ENCODE measurements at regions of chr1 and their contacts with region 1.

Region 1: DNA sequence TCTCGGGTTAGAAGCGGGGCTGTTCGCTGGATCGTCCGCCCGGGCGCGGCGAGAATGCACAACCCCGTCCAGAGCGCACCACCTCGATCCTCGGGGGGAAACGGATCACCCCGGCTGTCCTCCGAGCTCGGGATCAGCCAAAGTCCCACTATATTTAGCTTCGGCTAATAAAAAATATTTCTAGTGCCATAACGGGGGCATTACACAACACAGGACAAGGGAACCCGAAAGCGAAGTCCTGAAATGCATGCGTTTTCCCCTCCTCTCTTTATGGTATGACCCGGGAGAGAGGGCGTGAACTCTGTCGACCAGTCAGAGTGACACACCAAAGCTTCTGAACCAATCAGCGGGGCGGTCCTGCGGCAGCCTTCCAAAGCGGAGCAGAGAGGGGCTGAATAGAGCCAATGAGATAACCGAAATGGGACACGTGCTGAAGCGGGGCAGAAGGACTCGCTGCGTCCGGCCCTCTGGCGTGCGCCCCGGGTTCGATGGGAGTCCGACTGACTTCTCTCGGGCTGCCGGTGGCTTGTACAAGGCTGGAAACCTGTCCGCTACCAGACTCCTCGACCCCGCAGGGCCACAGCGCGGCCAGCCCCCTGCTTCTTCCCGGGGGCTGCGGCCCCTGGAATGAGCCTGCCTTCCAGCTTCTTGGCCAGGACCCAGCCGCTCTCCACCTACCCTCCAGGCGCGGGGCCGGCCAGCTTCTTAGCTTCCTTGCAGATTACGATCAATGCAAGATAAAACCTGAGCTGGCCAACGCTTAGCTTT is at the start of gene ALDH4A1:
- DNase-seq: peak; percentile 98 to 99
- ATAC-seq: peak; percentile 93 to 97
- H3K4me3 ChIP-seq: peak within 1 kb of the TSS; percentile 67 to 88 (median 80)
- H3K27ac ChIP-seq: peak within 1 kb of the TSS; percentile 89 to 98 (median 94)
- H3K4me1 ChIP-seq: peaks cover 28 to 36% of the 10 kb centered on the region in 2 donors
- H3K27me3 ChIP-seq: no peaks in the 10 kb centered on the region
- CTCF ChIP-seq: peak in 1 of 5 experiments; percentile 12
- POLR2A ChIP-seq: no peak
- total RNA-seq, gene ALDH4A1: 22.8 to 35.3 (median 31.4) TPM

Region 2: GRCh38 chr1:18868801-18869424 is 33.8 kb before region 1 on chr1:
- in situ Hi-C with region 1: no loop called
- intact Hi-C with region 1: no loop called
- DNase-seq: no peak
- ATAC-seq: no peak
- H3K4me3 ChIP-seq: no peak overlapping the region
- H3K27ac ChIP-seq: no peak overlapping the region
- H3K4me1 ChIP-seq: no peaks in the 10 kb centered on the region
- H3K27me3 ChIP-seq: no peaks in the 10 kb centered on the region
- CTCF ChIP-seq: no peak
- POLR2A ChIP-seq: no peak

Region 3: DNA sequence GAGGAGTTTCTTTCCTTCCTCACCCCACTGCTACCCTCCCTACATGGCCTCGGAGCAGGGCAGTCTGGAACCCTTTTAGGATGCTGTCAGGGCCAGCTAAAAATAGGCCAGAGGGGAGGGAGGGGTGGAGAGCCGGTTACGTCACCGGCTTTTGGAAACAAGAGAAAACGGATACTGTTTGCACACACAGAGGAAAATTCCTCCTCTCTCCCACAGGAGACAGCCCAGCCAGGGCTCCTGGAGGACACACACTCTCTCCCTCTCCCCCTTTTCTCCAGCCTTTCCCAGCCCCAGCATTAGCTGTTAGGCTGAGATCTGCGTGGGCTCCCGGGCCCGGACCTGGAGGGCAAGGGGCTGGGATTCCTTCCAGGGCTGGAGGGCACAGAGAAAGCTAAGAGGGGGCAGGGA is 19.6 kb after region 1 on chr1:
- in situ Hi-C with region 1: no loop called
- intact Hi-C with region 1: loop called (anchors 1 kb)
- DNase-seq: peak; percentile 73 to 83
- ATAC-seq: peak; percentile 87 to 91
- H3K4me3 ChIP-seq: peak overlapping the region in 2 of 4 donors; percentile 4 to 39
- H3K27ac ChIP-seq: peak overlapping the region; percentile 80 to 93 (median 84)
- H3K4me1 ChIP-seq: peaks cover 43 to 48% of the 10 kb centered on the region in 2 donors
- H3K27me3 ChIP-seq: no peaks in the 10 kb centered on the region
- CTCF ChIP-seq: peak in 3 of 5 experiments; percentile 7 to 16 (median 15)
- POLR2A ChIP-seq: peak; percentile 32 to 72

Region 4: DNA sequence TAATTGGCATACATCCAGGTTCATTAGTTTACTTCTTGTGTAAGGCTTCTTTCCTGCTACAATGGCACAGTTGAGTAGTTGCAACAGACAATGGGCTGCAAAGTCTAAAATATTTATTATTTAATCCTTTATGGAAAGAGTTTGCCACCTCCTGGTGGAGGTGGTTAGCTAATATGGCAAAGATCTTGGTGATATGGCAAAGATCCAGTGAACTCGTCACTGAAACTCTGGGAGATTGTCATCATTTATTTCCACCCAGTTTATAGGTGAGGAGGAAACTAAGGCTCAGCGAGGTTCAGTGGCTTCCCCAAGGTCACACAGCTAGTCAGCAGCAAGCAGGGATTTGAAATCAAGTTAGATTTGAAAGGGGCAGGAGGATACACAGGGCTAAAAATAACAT is 69.8 kb after region 1 on chr1:
- in situ Hi-C with region 1: loop called in 1 of 4 experiments (anchors 5 kb)
- intact Hi-C with region 1: loop called (anchors 1 kb)
- DNase-seq: no peak
- ATAC-seq: peak in 1 of 2 donors; percentile 75
- H3K4me3 ChIP-seq: no peak overlapping the region
- H3K27ac ChIP-seq: no peak overlapping the region
- H3K4me1 ChIP-seq: peaks cover 0 to 5% of the 10 kb centered on the region in 2 donors
- H3K27me3 ChIP-seq: no peaks in the 10 kb centered on the region
- CTCF ChIP-seq: peak in 4 of 5 experiments; percentile 11 to 40 (median 26)
- POLR2A ChIP-seq: no peak

Region 5: GRCh38 chr1:19087737-19088594 is 185.3 kb after region 1 on chr1:
- in situ Hi-C with region 1: loop called in 2 of 4 experiments (anchors 10 to 25 kb)
- intact Hi-C with region 1: loop called (anchors 5 kb)
- DNase-seq: no peak
- ATAC-seq: no peak
- H3K4me3 ChIP-seq: no peak overlapping the region
- H3K27ac ChIP-seq: peak overlapping the region; percentile 79 to 90 (median 86)
- H3K4me1 ChIP-seq: peaks cover 59 to 67% of the 10 kb centered on the region in 2 donors
- H3K27me3 ChIP-seq: no peaks in the 10 kb centered on the region
- CTCF ChIP-seq: no peak
- POLR2A ChIP-seq: no peak

Region 6: GRCh38 chr1:19240673-19241538 is 338.2 kb after region 1 on chr1:
- in situ Hi-C with region 1: loop called in 1 of 4 experiments (anchors 25 kb)
- intact Hi-C with region 1: loop called (anchors 10 kb)
- DNase-seq: peak; percentile 48 to 81
- ATAC-seq: peak; percentile 91 to 95
- H3K4me3 ChIP-seq: no peak overlapping the region
- H3K27ac ChIP-seq: peak overlapping the region; percentile 69 to 83 (median 78)
- H3K4me1 ChIP-seq: peaks cover 17 to 24% of the 10 kb centered on the region in 2 donors
- H3K27me3 ChIP-seq: no peaks in the 10 kb centered on the region
- CTCF ChIP-seq: peak; percentile 91 to 96 (median 94)
- POLR2A ChIP-seq: no peak

Measured in gastrocnemius medialis (tissue), 4 donors.